Activated CD8-positive, alpha-beta T cell treated with anti-CD3 and anti-CD28 coated beads for 36 hours (primary cell): ENCODE measurements at regions of chr17 and their contacts with region 1.

Region 1: GRCh38 chr17:76384222-76384986 is at the start of gene SPHK1:
- DNase-seq: peak; percentile 77
- ATAC-seq: peak; percentile 72
- H3K4me3 Mint-ChIP-seq: peak within 1 kb of the TSS; percentile 77
- H3K27ac Mint-ChIP-seq: peak within 1 kb of the TSS; percentile 93
- H3K4me1 Mint-ChIP-seq: peaks cover 3% of the 10 kb centered on the region
- H3K27me3 Mint-ChIP-seq: no peaks in the 10 kb centered on the region
- CTCF ChIP-seq: peak; percentile 15
- total RNA-seq, gene SPHK1: 15.7 to 17.7 TPM

Region 2: GRCh38 chr17:76307299-76307965 is 77.0 kb before region 1 on chr17:
- CTCF ChIA-PET with region 1: interaction called, 30 read pairs
- POLR2A ChIA-PET with region 1: interaction called, 4 read pairs
- intact Hi-C with region 1: loop called (anchors 5 kb)
- DNase-seq: no peak
- ATAC-seq: no peak
- H3K4me3 Mint-ChIP-seq: no peak overlapping the region
- H3K27ac Mint-ChIP-seq: no peak overlapping the region
- H3K4me1 Mint-ChIP-seq: peaks cover 1% of the 10 kb centered on the region
- H3K27me3 Mint-ChIP-seq: no peaks in the 10 kb centered on the region
- CTCF ChIP-seq: no peak

Region 3: DNA sequence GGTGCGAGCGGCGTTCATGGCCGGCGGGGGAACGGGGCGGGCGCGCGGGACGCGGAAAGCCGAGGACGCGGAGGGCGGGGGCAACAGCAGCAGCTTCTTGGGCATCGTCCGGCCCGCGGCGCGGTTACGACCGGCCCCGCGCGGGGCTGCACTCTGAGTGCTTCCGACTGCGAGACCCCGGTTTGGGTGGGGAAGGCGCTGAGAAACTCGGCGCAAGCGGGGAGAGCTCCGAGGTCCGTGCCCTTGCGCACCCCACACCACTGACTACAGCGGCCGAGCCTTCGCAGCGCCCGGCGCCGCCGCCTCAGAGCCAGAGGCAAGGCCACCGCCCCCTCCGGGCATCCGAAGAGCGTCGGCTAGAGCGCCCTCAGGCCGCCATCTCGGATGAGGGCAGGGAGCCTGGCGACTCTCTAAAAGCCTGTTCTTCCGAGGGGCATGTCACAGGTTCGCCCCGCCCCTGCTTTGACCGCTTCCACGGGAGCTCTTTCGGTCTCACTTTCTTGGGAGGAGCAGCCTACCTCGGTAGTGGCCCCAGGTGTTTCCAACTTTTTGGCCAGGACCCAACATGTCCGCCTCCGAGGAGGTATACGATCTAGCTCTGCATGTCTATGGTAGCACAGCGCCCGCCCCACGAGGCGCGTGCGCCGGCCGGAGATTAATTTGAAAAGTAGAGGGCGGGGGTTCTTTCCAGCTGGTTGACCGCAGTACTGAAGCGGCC is 30.6 kb before region 1 on chr17 and contains the start of gene PRPSAP1:
- CTCF ChIA-PET with region 1: interaction called, 73 read pairs
- POLR2A ChIA-PET with region 1: interaction called, 42 read pairs
- intact Hi-C with region 1: no loop called
- DNase-seq: peak; percentile 88
- ATAC-seq: peak; percentile 96
- H3K4me3 Mint-ChIP-seq: peak within 1 kb of the TSS; percentile 83
- H3K27ac Mint-ChIP-seq: peak within 1 kb of the TSS; percentile 98
- H3K4me1 Mint-ChIP-seq: peaks cover 16% of the 10 kb centered on the region
- H3K27me3 Mint-ChIP-seq: no peaks in the 10 kb centered on the region
- CTCF ChIP-seq: peak; percentile 37
- total RNA-seq, gene PRPSAP1: 28.1 to 29.9 TPM

Region 4: DNA sequence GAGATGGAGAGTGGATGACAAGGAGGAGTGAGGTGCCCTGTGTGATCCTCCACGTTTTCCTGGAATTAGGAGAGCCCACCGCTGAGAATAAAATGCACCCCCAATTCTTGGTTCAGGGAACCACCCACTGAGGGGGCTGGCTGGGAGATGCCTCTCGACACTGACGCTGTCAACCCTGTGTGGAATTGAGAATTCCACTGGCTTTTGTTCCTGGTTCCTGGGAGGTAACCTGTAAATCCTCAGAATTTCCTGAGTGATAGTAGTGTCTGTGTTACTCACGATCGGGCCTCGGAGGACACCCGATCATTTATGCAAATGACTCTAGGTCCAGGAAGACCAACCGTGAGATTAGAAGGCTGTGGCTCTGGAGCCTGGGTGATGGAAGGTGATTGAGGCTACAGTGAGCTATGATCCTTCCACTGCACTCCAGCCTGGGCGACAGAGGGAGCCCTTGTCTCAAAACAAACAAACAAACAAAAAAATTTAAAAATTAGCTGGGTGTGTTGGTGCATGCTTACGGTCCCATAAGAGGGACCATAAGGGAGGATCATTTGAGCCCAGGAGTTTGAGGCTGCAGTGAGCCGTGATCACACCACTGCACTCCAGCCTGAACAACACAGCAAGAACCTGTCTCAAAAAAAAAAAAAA is 19.0 kb before region 1 on chr17:
- CTCF ChIA-PET with region 1: interaction called, 12 read pairs
- POLR2A ChIA-PET with region 1: interaction called, 8 read pairs
- intact Hi-C with region 1: no loop called
- DNase-seq: no peak
- ATAC-seq: no peak
- H3K4me3 Mint-ChIP-seq: no peak overlapping the region
- H3K27ac Mint-ChIP-seq: no peak overlapping the region
- H3K4me1 Mint-ChIP-seq: peaks cover 3% of the 10 kb centered on the region
- H3K27me3 Mint-ChIP-seq: no peaks in the 10 kb centered on the region
- CTCF ChIP-seq: no peak

Region 5: DNA sequence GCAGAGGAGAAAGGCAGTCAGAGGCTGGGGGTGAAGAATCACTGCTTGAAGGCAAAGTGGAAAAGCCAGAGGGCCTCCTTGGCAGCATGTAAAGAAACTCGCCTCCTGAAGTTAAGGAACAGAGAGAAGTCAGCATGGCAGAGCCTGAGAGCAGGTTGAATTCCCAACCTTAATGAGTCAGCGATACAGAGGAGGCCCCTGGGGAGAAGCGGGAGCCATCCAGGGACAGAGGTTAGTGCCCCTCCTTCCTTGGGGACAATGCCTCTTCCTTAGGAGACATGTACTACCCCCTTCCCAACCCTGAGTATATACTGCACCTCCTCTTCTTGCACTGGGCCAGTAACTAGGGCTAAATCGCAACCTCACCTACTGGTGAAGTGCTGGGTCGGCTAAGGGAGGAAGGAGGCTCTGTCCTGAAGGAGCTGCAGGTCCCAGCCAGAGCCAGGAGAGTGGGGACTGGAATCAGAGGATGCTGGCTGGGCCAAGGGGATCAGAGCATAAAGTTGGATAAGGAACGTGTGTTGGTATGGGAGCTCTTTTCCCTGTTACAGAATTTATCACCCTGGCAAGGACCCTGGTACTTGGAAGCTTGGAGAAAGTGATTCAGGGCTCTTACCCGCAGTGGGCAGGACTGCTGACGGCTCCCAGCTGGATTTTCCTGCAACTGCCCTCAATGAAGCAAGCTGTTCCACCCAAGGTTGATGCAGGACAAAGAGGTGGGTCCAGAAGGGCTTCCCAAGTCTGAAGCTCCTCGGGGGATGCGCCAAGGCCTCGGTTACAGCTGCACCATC is 77.6 kb after region 1 on chr17:
- CTCF ChIA-PET with region 1: no interaction called
- POLR2A ChIA-PET with region 1: no interaction called
- intact Hi-C with region 1: no loop called
- DNase-seq: no peak
- ATAC-seq: no peak
- H3K4me3 Mint-ChIP-seq: no peak overlapping the region
- H3K27ac Mint-ChIP-seq: no peak overlapping the region
- H3K4me1 Mint-ChIP-seq: peaks cover 2% of the 10 kb centered on the region
- H3K27me3 Mint-ChIP-seq: no peaks in the 10 kb centered on the region
- CTCF ChIP-seq: no peak

Region 6: GRCh38 chr17:76501018-76501826 is 116.8 kb after region 1 on chr17 and contains the start of gene RHBDF2:
- CTCF ChIA-PET with region 1: no interaction called
- POLR2A ChIA-PET with region 1: interaction called, 10 read pairs
- intact Hi-C with region 1: no loop called
- DNase-seq: peak; percentile 95
- ATAC-seq: peak; percentile 97
- H3K4me3 Mint-ChIP-seq: peak within 1 kb of the TSS; percentile 90
- H3K27ac Mint-ChIP-seq: peak within 1 kb of the TSS; percentile 92
- H3K4me1 Mint-ChIP-seq: peaks cover 40% of the 10 kb centered on the region
- H3K27me3 Mint-ChIP-seq: no peaks in the 10 kb centered on the region
- CTCF ChIP-seq: no peak
- total RNA-seq, gene RHBDF2: 19.9 to 20.4 TPM

Region 7: DNA sequence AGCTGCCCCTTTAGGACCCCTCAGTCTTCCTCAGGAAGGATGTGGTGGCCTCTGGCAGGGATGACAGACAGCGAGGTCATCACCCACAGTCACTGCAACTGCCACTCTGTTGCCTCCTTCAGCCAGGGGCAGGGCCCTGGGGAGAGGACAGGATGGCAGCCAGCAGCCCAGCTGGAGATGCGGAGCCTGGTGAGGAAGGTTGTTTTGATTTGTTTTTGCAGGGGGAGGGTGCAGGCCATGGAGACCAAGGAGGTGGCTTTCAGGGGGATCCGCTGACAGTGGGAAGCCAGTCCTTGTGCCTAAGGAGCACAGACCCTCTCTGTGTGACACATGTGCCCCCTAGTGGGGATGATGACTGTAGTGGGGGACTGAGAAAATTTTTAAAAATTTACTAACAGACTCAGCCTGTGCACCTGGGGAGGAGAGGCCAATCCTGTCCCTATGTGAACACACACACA is 162.8 kb after region 1 on chr17:
- CTCF ChIA-PET with region 1: no interaction called
- POLR2A ChIA-PET with region 1: no interaction called
- intact Hi-C with region 1: no loop called
- DNase-seq: peak; percentile 70
- ATAC-seq: peak; percentile 89
- H3K4me3 Mint-ChIP-seq: no peak overlapping the region
- H3K27ac Mint-ChIP-seq: no peak overlapping the region
- H3K4me1 Mint-ChIP-seq: peaks cover 5% of the 10 kb centered on the region
- H3K27me3 Mint-ChIP-seq: peaks cover 4% of the 10 kb centered on the region
- CTCF ChIP-seq: peak; percentile 67